ENCODE measurements at regions of chr3 and their contacts with region 1.

Region 1: DNA sequence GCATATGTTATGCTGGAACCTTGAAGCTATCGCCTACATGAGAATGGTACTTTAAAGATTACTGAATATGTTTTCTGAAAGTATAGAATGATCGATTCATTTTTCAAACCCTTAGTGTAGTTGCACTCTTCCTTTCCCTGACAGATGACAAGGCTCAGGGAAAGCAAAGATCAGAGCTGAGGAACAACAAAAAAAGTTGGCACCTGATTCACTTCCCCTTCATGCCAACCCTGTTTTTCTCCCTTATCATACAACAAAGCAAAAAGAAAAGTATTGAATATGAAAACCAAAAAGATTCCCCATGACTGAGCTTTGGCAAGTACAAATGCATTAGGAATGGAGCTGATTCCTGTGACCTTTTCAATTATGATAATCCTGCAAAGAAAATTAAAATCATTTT is 1012.7 kb downstream of the FHIT start:
- DNase-seq: no peak
- H3K4me3 Mint-ChIP-seq: no peak overlapping the region
- H3K27ac Mint-ChIP-seq: no peak overlapping the region
- H3K4me1 Mint-ChIP-seq: peaks cover 6% of the 10 kb centered on the region
- H3K27me3 Mint-ChIP-seq: no peaks in the 10 kb centered on the region

Region 2: GRCh38 chr3:60594025-60594424 is 355.5 kb after region 1 on chr3:
- CTCF ChIA-PET with region 1: no interaction called
- intact Hi-C with region 1: loop called (anchors 10 kb)
- DNase-seq: no peak
- H3K4me3 Mint-ChIP-seq: no peak overlapping the region
- H3K27ac Mint-ChIP-seq: no peak overlapping the region
- H3K4me1 Mint-ChIP-seq: no peaks in the 10 kb centered on the region
- H3K27me3 Mint-ChIP-seq: no peaks in the 10 kb centered on the region